Heart right ventricle (tissue), 16 donors: ENCODE measurements at regions of chr3 and their contacts with region 1.

Region 1: GRCh38 chr3:34683851-34684250 is 885.4 kb downstream of the PDCD6IP start:
- DNase-seq: peak; percentile 56 to 60
- ATAC-seq: peak in 6 of 8 donors; percentile 49 to 84 (median 55)
- H3K4me3 ChIP-seq: no peak overlapping the region
- H3K27ac ChIP-seq: no peak overlapping the region
- H3K4me1 ChIP-seq: peaks cover 0 to under 1% (median 0%) of the 10 kb centered on the region in 9 donors
- H3K27me3 ChIP-seq: no peaks in the 10 kb centered on the region
- CTCF ChIP-seq: peak; percentile 22 to 71 (median 62)

Region 2: GRCh38 chr3:33883538-33883950 is 800.3 kb before region 1 on chr3:
- intact Hi-C with region 1: loop called in 9 of 10 experiments (anchors 1 to 10 kb)
- DNase-seq: peak in 1 of 2 donors; percentile 24
- ATAC-seq: peak in 3 of 8 donors; percentile 30 to 58 (median 38)
- H3K4me3 ChIP-seq: peak overlapping the region in 6 of 10 donors; percentile 6 to 27 (median 19)
- H3K27ac ChIP-seq: peak overlapping the region in 1 of 10 donors; percentile 0
- H3K4me1 ChIP-seq: peaks cover 0 to 12% (median 6%) of the 10 kb centered on the region in 9 donors
- H3K27me3 ChIP-seq: no peaks in the 10 kb centered on the region
- CTCF ChIP-seq: peak; percentile 61 to 90 (median 87)

Region 3: GRCh38 chr3:33915791-33916546 is 767.9 kb before region 1 on chr3:
- intact Hi-C with region 1: loop called in 1 of 10 experiments (anchors 10 kb)
- DNase-seq: peak; percentile 6 to 16
- ATAC-seq: peak in 4 of 8 donors; percentile 47 to 87 (median 56)
- H3K4me3 ChIP-seq: no peak overlapping the region
- H3K27ac ChIP-seq: no peak overlapping the region
- H3K4me1 ChIP-seq: no peaks in the 10 kb centered on the region
- H3K27me3 ChIP-seq: peaks cover 0 to 4% (median 0%) of the 10 kb centered on the region in 7 donors
- CTCF ChIP-seq: peak in 7 of 9 donors; percentile 31 to 49 (median 39)

Region 4: DNA sequence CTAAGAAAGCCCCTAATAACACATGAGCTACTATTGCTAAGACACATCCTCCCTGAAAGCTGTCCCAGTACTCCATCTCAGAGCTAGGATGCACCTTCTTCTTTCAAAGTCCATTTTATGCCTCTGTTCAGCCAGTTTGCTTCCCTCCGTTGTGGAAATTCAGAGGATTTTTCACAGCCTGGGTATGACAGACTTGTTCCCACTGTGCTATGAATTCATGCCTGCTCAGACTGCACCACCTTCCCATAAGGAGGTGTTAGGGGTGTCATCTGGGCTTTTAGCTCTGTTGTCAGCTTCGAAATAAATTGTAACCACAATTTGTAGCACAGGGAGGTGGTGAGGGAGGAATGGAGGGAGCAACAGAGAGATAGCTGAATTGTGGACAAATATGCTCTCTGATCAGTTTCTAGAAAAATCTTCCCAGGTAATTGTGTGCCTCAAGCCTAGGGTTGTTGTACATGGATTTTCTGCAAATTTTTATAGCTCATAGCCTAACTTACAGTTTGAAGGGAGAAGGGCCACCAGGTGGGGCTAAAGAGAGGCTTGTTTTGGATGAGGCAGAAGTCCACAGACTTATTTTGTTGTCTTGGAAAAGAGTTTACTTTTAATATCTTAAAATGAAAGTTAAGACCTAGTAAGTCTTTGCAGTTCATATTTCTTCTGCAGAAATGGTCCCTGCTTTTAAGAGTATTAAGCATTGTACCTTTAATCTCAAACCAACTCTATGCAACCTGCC is 423.4 kb before region 1 on chr3:
- intact Hi-C with region 1: loop called (anchors 2 to 10 kb)
- DNase-seq: peak in 1 of 2 donors; percentile 59
- ATAC-seq: peak in 4 of 8 donors; percentile 29 to 49 (median 46)
- H3K4me3 ChIP-seq: no peak overlapping the region
- H3K27ac ChIP-seq: peak overlapping the region in 2 of 10 donors; percentile 19 to 43
- H3K4me1 ChIP-seq: peaks cover 3 to 43% (median 23%) of the 10 kb centered on the region in 9 donors
- H3K27me3 ChIP-seq: no peaks in the 10 kb centered on the region
- CTCF ChIP-seq: peak; percentile 30 to 77 (median 70)

Region 5: GRCh38 chr3:34793057-34793456 is 109.2 kb after region 1 on chr3:
- intact Hi-C with region 1: no loop called
- DNase-seq: no peak
- ATAC-seq: no peak
- H3K4me3 ChIP-seq: no peak overlapping the region
- H3K27ac ChIP-seq: no peak overlapping the region
- H3K4me1 ChIP-seq: no peaks in the 10 kb centered on the region
- H3K27me3 ChIP-seq: no peaks in the 10 kb centered on the region
- CTCF ChIP-seq: no peak

Region 6: GRCh38 chr3:34882764-34883163 is 198.9 kb after region 1 on chr3:
- intact Hi-C with region 1: no loop called
- DNase-seq: no peak
- ATAC-seq: no peak
- H3K4me3 ChIP-seq: no peak overlapping the region
- H3K27ac ChIP-seq: no peak overlapping the region
- H3K4me1 ChIP-seq: no peaks in the 10 kb centered on the region
- H3K27me3 ChIP-seq: no peaks in the 10 kb centered on the region
- CTCF ChIP-seq: peak in 4 of 9 donors; percentile 9 to 35 (median 22)